Cardiac septum (tissue), 1 donor: ENCODE measurements at regions of chr3 and their contacts with region 1.

Region 1: DNA sequence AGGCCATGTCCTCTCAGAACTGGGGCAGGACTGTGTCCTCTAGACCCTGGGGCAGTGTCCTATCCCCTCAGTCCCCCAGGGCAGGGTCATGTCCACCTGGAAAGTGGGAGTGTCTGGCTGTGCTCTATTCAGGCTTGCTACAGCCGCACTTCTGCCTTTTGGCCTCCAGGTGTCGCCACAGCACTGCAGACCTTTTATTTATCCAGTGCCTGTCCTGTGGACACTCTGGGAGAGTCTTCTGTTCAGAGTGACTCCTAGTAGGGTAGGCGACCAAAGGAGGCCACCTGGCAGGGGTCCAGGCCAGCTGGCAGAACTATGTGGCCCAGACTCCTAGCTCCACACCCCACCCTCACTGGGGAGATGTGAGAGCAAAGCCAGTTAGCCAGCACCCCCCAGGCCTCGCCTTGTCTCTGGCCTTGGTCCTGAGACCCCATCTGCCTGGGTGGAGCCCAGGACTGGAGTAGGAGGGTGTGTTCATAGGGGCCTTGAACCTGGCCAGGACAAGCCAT is 3.9 kb downstream of the TMIE start:
- DNase-seq: no peak

Region 2: DNA sequence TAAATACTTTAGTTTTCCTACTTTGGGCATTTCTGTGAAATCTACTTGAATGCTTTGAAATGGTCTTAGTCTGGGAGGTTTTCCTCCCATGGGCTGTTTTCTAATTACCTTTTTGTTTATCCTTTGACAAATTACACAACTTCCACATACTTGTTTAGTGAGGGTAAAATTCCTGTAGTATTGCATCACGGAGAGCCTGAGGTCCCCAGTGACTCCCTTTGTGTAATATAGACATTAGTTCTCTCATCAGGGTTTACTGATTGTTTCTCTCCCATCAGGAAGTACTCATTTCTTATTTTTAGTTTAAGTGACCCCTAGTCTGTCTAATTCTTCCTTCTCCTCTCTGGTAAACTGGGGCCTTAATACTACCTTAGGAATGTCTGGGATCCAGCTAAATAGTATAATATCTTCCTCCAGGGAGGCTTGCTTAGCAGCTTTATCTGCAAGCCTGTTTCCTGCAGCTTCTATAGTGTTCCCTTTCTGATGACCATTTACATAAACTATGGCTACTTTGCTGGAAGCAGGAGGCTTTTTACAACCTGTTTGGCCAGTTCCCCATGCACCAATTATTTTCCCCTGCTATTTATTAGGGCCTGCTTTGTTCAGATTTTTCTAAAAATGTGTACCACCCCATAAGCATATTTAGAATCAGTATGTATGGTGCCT is 590.6 kb before region 1 on chr3:
- intact Hi-C with region 1: no loop called
- DNase-seq: no peak

Region 3: DNA sequence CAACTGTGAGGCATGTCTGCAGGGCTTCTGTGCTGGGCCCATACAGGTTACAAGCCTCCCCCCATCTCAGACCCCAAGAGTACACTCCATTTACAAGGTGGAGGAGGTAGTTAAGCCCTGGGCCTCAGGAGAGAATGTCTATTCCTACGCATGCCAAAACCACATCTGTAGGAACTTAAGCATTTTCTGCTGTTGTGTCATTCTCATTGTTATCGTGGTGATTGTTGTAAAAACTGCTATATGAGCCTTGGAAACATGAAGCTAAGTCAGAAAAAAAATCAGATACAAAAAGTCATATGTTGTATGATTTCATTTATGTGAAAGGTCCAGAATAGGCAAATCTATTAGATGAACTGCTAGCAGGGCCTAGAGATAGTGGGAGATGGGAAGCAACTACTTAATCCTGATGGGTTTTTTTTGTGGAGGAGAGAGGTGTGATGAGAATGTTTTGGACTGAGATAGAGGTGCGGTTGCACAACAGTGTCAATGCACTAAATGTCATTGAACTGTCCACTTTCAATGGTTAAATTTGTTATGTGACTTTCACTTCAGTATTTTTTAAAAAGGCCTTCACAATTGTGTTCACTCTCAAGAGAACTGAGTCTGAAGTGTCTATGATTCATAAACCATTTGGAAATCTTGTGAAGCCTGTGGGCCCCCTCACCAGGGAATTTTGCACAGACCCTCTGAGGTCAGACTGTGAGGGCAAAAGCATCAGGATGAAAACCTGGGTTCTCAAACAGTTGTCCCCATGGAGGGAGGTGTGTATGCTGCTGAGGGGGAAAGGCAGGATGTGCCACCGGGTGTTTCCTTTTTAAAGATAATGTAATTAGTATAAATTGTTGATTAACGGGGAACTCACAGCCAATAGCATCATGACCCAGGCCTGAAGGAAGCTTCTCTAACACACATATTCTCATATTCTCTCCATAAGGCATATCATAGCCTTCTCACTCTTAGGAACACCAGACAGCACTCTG is 204.1 kb before region 1 on chr3:
- intact Hi-C with region 1: no loop called
- DNase-seq: no peak

Region 4: DNA sequence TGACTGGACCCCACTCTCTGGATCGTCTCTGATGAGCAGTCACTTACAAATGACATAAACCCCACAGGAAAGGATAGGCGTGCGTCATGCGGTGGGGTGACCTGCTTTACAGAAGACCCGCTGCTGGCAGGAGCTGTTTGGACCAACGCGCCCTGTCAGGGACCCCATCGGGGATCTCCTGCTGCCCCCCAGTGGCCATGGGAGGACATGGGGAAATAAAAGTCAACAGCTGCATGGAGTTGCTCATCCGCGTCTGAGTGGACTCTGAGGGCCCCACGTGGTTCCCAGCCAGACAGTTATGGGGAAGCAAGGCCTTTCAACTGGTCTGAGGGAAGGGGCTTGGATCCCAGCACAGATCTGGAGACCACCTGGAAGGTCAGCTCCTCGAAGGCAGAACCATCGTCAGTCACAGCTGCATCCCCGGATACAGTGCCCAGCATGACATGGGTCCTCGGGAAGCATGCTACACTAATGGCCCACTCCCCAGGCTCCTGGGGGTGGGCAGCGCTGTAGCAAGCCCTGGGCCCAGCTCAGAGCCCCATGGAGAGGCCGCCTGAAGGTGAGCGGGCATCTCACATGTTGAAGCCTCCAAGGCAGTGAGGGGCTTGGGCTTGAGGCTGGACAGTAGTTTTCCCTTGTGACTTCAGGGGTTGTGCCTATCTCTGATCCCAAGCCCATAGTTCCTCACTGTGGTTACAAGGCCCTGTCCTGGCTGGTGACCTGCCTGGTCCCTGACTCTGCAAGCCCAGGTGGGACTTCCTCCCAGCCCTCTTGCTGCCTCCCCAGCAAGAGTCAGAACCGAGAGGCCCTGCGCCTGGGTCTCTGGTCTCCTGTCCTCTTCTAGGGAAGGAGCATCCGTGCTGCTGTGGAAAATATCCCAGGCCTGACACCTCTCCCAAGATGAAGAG is 204.7 kb after region 1 on chr3:
- intact Hi-C with region 1: loop called (anchors 1 kb)
- DNase-seq: peak; percentile 89

Region 5: GRCh38 chr3:46998121-46998851 is 293.2 kb after region 1 on chr3:
- intact Hi-C with region 1: loop called (anchors 10 kb)
- DNase-seq: peak; percentile 86